ENCODE measurements at regions of chr7 and their contacts with region 1.

Region 1: GRCh38 chr7:100177045-100178001 is at the starts of genes GPC2 and STAG3:
- DNase-seq: peak; percentile 97
- H3K4me3 Mint-ChIP-seq: peak within 1 kb of the TSS; percentile 82
- H3K27ac Mint-ChIP-seq: peak within 1 kb of the TSS; percentile 83
- H3K4me1 Mint-ChIP-seq: peaks cover 46% of the 10 kb centered on the region
- H3K27me3 Mint-ChIP-seq: peaks cover 15% of the 10 kb centered on the region
- total RNA-seq, gene GPC2: 3.9 and 4.8 TPM in 2 replicates
- total RNA-seq, gene STAG3: 25.0 and 30.6 TPM in 2 replicates

Region 2: DNA sequence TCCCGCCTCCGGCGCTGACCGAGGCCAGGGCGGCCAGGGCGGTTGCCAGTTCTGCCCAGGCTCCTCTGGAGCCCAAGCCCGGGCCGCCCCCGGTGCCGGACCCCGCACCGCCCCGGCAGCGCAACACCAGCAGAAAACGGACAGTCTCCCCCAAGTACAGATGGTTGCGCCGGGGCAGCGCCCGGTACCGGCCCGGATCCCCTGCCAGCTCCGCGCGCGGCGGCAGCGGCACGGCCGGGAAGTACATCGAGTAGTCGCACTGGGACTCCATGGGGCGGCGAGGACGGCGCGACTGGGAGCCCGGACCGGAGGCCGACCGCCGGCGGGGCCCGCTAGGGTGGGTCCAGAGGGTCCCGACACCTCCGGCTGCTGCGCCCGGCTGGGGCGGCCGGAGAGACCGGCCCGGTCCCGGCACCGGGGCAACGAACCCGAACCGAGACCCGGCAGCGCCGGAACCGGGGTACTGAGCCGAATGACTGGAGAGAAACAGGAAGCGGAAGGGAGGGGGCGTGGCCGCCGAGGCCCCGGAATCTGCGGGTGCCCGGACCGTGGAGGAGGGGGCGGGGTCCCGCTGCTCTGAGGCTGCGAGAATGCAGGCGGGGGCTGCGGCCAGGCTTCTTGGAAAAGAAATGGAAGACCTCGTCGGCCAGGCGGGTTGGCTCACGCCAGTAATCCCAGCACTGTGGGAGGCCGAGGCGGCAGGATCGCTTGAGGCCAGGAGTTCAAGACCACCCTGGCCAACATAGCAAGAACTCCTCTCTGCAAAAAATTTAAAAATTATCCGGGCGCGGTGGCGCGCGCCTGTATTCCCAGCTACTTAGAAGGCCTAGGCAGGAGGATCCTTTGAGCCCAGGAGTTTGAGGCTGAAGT is 18.9 kb before region 1 on chr7 and contains the start of gene TRAPPC14:
- intact Hi-C with region 1: loop called (anchors 1 kb)
- DNase-seq: peak; percentile 89
- H3K4me3 Mint-ChIP-seq: peak within 1 kb of the TSS; percentile 81
- H3K27ac Mint-ChIP-seq: peak within 1 kb of the TSS; percentile 81
- H3K4me1 Mint-ChIP-seq: peaks cover 49% of the 10 kb centered on the region
- H3K27me3 Mint-ChIP-seq: no peaks in the 10 kb centered on the region
- total RNA-seq, gene TRAPPC14: 43.9 and 44.3 TPM in 2 replicates

Region 3: DNA sequence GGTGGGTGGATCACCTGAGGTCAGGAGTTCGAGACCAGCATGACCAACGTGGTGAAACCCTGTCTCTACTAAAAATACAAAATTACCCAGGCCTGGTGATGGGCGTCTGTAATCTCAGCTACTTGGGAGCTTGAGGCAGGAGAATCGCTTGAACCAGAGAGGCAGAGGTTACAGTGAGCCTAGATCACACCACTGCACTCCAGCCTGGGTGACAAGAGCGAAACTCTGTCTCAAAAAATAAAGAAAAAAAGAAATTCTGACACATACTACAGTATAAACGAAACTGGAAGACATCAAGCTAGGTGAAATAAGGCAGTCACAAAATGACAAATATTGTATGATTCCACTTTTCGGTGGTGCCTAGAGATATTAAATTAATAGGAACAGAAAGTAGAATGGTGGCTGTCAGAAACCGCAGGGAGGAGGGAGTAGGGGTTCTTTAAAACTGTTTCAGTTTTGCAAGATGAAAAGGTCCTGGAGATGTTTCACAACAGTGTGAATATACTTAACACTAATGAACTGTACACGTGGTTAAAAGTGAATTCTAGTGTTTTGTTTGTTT is 219.2 kb after region 1 on chr7:
- intact Hi-C with region 1: no loop called
- DNase-seq: peak; percentile 53
- H3K4me3 Mint-ChIP-seq: peak overlapping the region; percentile 51
- H3K27ac Mint-ChIP-seq: peak overlapping the region; percentile 84
- H3K4me1 Mint-ChIP-seq: peaks cover 22% of the 10 kb centered on the region
- H3K27me3 Mint-ChIP-seq: peaks cover 51% of the 10 kb centered on the region

Measured in activated T-helper 1 cell treated with anti-CD3 and anti-CD28 coated beads, Interleukin-12 subunit alpha, Interleukin-12 subunit beta, Interleukin-2, Interleukin-4 antibody, amounts not matched to agents 30 ng/mL and 10 ng/mL and 1 ng/mL, durations not matched to agents 14 hours and 24 hours and 36 hours (primary cell).